Astrocyte of the cerebellum (primary cell): ENCODE measurements at regions of chr7 and their contacts with region 1.

Region 1: GRCh38 chr7:130615583-130615982 is 53.0 kb downstream of the COPG2 start:
- DNase-seq: no peak
- H3K4me3 ChIP-seq: no peak overlapping the region
- CTCF ChIP-seq: no peak

Region 2: DNA sequence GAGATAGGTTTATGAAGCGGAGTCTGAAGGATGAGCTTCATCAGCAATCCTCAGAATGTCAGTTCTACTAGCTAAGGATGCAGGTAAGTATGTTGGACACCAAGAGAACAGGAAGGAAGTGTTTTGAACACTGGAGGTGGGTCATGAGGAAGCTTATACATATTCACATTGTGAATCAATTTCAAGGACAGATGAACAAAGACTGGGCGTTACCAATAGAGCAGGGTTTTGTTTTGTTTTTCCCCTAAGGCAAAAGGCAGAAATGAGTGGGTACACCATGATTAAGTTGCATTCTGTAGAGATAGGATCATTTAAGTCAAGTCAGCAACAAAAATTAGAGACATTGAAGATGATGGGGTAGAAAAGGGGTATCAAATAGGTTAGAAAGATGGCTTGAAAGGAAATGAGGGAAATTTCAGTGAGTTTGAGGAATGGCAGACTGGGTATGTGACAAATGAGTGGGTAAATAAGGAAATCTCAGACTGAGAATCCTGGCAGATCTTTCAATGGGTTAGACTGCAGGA is 72.0 kb before region 1 on chr7:
- in situ Hi-C with region 1: loop called (anchors 10 kb)
- DNase-seq: no peak
- H3K4me3 ChIP-seq: no peak overlapping the region
- CTCF ChIP-seq: no peak

Region 3: DNA sequence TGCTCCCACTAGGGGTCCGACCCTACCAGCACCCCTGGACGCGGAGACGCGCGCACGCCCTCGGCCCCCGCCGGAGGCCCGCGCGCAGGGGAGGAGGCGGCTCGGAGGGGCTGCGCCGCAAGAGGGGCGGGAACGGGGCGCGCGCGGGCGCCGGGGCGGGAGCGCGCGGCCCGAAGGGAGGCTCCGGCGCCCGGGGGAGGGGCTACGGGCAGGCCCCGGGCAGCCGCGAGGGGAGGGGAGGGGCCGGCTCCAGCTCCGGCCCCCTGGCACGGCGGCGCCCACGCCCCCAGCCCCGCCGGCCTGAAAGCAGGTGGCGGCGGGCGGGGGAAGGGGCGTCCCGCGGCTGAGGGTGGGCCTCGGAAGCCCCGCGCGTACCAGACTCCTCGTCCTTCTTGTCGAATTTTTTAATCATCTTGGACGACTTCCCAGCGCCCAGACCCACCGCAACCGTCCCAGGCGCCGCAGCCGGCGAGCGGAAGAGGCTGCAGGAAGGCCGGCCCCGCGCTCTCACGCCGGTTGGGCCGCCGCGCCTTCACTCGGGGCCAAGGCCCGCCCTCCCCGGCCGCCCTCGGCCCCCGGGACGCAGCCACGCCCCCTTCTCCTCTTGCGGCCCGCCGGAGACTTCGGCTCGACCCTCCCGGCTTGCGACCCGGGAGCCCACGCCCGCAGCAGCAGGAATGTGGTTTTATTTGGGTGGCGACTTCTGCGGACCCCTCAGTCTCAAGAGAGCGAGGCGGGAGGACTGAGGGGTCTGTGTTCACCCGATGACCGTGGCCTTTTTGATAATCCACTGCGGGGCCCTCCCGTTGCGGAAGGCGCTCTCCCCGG is 52.9 kb after region 1 on chr7 and contains the start of gene COPG2:
- in situ Hi-C with region 1: no loop called
- DNase-seq: peak; percentile 62
- H3K4me3 ChIP-seq: peak within 1 kb of the TSS; percentile 73
- CTCF ChIP-seq: no peak